GM13976 (cell line): ENCODE measurements at regions of chr16 and their contacts with region 1.

Region 1: GRCh38 chr16:84186685-84187437 is at the start of gene TAF1C:
- DNase-seq: peak; percentile 99
- CTCF ChIP-seq: peak; percentile 98

Region 2: GRCh38 chr16:83971165-83972130 is 215.4 kb before region 1 on chr16:
- in situ Hi-C with region 1: loop called (anchors 10 kb)
- DNase-seq: no peak
- CTCF ChIP-seq: no peak

Region 3: DNA sequence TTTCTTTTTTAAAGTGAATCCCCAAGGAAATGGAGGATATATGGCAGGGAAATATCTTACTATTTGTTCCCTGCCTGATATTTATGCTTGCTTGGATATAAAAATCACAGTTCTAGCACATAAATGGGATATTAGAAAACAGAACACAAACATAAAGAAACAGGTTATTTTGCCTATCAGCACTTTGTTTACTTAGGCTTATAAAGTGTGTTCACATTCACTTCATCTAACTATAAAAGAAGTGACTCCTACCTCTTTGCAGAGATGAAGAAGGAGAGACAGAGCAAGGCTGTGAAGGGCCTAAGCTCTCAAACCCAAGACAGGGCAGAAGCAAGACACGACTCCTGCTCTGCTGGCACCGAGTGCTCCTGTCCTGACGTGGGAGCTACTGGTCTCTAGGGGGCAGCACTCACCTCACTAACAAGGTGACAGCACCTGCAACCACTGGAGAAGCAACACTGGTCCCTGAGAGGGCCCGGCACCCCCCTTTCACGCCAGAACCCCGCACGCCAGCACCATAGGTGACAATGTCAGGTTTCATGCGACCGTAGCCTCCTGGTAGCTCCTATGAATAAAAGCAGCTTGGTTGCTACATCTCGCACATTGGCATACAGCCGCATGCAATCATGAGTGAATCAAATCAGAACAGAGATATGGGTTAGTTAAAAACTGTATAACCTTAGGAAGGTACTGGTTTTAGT is 102.1 kb before region 1 on chr16:
- in situ Hi-C with region 1: loop called (anchors 5 kb)
- DNase-seq: peak; percentile 86
- CTCF ChIP-seq: peak; percentile 88